Aorta (tissue), 5 donors: ENCODE measurements at regions of chr9 and their contacts with region 1.

Region 1: GRCh38 chr9:12813960-12814876 is 39.4 kb downstream of the LURAP1L start:
- DNase-seq: peak; percentile 50 to 57
- ATAC-seq: peak; percentile 88
- H3K4me3 ChIP-seq: no peak overlapping the region
- H3K27ac ChIP-seq: peak overlapping the region in 1 of 2 donors; percentile 28
- H3K4me1 ChIP-seq: peaks cover 5 to 13% of the 10 kb centered on the region in 2 donors
- H3K27me3 ChIP-seq: no peaks in the 10 kb centered on the region

Region 2: GRCh38 chr9:12708562-12709298 is 105.5 kb before region 1 on chr9:
- intact Hi-C with region 1: no loop called
- DNase-seq: no peak
- ATAC-seq: no peak
- H3K4me3 ChIP-seq: no peak overlapping the region
- H3K27ac ChIP-seq: no peak overlapping the region
- H3K4me1 ChIP-seq: no peaks in the 10 kb centered on the region
- H3K27me3 ChIP-seq: no peaks in the 10 kb centered on the region

Region 3: GRCh38 chr9:12784461-12785259 is 29.6 kb before region 1 on chr9:
- intact Hi-C with region 1: loop called (anchors 2 to 5 kb)
- DNase-seq: peak; percentile 76 to 81
- ATAC-seq: peak; percentile 86
- H3K4me3 ChIP-seq: no peak overlapping the region
- H3K27ac ChIP-seq: peak overlapping the region; percentile 97 to 99
- H3K4me1 ChIP-seq: peaks cover 0 to 2% of the 10 kb centered on the region in 2 donors
- H3K27me3 ChIP-seq: no peaks in the 10 kb centered on the region